Thyroid gland (tissue), 4 donors: ENCODE measurements at regions of chr3 and their contacts with region 1.

Region 1: GRCh38 chr3:134212906-134213665 is 37.6 kb downstream of the RYK start:
- DNase-seq: peak; percentile 84 to 90
- H3K4me3 ChIP-seq: no peak overlapping the region
- H3K27ac ChIP-seq: no peak overlapping the region
- H3K4me1 ChIP-seq: peaks cover 0 to 8% of the 10 kb centered on the region in 2 donors
- H3K27me3 ChIP-seq: no peaks in the 10 kb centered on the region
- CTCF ChIP-seq: peak; percentile 92 to 98 (median 94)
- POLR2A ChIP-seq: no peak

Region 2: DNA sequence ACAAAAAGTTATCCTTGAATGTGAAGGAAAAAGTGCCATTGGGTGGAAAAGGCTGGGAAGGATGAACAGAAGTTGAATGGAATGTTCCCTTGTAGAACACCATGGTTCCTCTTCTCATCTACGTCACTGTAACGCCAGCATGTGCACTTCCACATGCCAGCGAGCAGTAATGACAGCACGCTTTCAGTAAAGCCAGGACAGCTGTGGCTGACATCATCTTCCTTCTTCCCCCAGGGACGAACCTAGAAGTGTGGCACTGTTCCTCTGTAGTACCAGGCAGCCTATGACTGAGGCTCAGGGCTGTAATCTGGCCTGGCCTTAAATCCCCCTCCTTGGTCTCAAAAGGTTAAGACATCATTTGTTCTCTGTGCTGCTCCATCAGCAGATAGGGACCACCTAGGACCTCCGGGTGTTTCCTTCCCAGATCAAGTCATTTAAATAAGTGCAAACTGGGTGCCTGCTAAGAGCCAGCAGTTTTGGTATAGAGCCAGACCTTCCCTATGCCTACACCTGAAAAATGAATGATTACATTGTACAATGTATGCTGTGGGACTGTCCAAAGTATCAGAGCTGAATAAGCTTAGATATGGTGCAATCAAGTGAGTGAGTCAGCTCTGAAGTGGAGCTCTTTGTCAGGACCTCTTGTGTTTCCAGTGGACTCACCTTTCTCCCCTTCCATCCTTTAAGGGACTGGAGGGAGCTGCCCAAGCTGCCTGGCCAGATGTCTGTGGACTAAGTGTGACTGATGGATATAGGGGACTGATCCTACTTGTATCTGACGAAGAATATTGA is 413.1 kb before region 1 on chr3:
- intact Hi-C with region 1: no loop called
- DNase-seq: no peak
- H3K4me3 ChIP-seq: no peak overlapping the region
- H3K27ac ChIP-seq: no peak overlapping the region
- H3K4me1 ChIP-seq: peaks cover 0 to under 1% of the 10 kb centered on the region in 2 donors
- H3K27me3 ChIP-seq: no peaks in the 10 kb centered on the region
- CTCF ChIP-seq: no peak
- POLR2A ChIP-seq: no peak

Region 3: GRCh38 chr3:134054231-134054630 is 158.9 kb before region 1 on chr3:
- intact Hi-C with region 1: no loop called
- DNase-seq: peak; percentile 84 to 85
- H3K4me3 ChIP-seq: no peak overlapping the region
- H3K27ac ChIP-seq: peak overlapping the region in 1 of 3 donors; percentile 1
- H3K4me1 ChIP-seq: peaks cover 32 to 50% of the 10 kb centered on the region in 2 donors
- H3K27me3 ChIP-seq: no peaks in the 10 kb centered on the region
- CTCF ChIP-seq: no peak
- POLR2A ChIP-seq: no peak

Region 4: DNA sequence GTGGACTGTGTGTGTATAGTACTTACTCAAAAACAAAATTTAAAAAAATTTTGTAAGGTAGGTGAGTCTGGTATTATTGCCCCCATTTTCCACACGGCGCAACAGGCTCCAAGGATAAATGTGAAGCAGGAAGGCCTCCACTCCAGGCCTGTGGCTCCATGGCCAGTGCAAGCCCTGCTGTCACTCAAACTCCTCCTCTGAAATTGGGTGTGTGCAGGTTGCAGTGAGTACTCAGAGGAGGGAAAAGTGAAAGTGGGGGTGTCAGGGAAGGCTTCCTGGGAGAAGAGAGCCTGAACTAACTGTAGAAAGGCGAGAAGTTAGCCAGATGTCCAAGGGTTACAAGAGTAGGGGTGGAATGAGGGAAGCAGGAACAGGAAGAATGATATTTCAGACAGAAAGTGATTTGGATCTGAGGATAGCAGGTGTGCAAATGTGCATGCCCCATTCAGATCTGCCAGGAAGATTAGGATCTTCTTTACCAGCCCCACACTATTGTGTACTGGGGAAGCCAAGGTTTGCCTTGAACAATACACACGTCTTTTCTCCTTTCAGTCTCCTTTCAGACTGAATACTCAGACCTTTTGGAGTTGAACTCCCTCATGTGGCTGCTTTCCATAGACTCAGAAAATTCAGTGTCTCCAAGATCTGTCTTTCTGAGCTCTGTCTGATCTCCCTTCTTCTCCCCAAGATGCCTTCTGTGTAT is 86.2 kb after region 1 on chr3:
- intact Hi-C with region 1: loop called (anchors 5 kb)
- DNase-seq: no peak
- H3K4me3 ChIP-seq: no peak overlapping the region
- H3K27ac ChIP-seq: peak overlapping the region in 2 of 3 donors; percentile 22 to 33
- H3K4me1 ChIP-seq: no peaks in the 10 kb centered on the region
- H3K27me3 ChIP-seq: no peaks in the 10 kb centered on the region
- CTCF ChIP-seq: peak in 5 of 6 experiments; percentile 18 to 80 (median 62)
- POLR2A ChIP-seq: no peak